Activated CD4-positive, alpha-beta T cell treated with anti-CD3 and anti-CD28 coated beads for 36 hours (primary cell): ENCODE measurements at regions of chr16 and their contacts with region 1.

Region 1: GRCh38 chr16:30698139-30698815 is 694 bp upstream of the SRCAP start:
- DNase-seq: peak; percentile 100
- ATAC-seq: peak; percentile 75
- H3K4me3 Mint-ChIP-seq: peak overlapping the region; percentile 96
- H3K27ac Mint-ChIP-seq: peak overlapping the region; percentile 99
- H3K4me1 Mint-ChIP-seq: peaks cover 33% of the 10 kb centered on the region
- H3K27me3 Mint-ChIP-seq: no peaks in the 10 kb centered on the region

Region 2: DNA sequence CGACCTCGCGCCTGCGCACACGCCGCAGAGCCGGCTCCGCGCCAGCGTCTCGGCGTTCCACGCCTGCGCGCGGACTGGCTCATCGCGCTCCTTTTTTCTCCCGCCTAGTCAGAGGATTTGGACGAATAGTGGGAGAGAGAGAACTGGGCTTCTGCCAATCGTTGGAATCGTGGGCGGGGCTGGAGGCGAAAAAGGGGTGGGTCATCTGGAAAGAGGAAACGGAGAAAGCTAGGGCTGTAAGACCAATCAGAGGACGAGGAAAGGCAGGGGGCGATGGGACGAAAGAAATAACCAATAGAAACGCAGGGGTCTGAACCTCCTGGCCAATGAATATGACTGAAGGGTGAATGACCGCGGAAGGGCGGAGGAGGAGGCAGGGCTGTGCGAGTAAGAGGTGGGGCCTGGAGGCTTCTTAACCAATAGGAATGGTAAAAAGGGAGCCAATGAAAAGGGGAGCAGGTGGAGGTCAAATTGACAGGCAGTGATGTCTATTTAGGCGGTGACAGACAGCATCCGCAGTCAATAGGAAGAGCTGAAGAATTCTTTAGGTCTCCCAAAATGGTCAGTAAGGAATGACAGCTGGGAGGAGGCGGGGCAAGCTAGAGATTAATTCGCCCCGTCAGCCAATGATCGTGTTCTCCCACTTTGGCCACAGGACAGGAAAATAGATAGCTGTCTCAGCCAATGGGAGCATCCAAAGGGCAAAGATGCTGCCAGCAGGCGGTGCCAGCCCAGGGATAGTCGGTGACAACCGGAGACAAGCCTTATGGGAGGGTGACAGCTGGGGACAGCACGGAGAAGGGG is 327.6 kb before region 1 on chr16 and contains the start of gene TBC1D10B:
- CTCF ChIA-PET with region 1: no interaction called
- POLR2A ChIA-PET with region 1: no interaction called
- intact Hi-C with region 1: loop called in 1 of 2 experiments (anchors 2 kb)
- DNase-seq: peak; percentile 99
- ATAC-seq: peak; percentile 88
- H3K4me3 Mint-ChIP-seq: peak within 1 kb of the TSS; percentile 89
- H3K27ac Mint-ChIP-seq: peak within 1 kb of the TSS; percentile 97
- H3K4me1 Mint-ChIP-seq: peaks cover 40% of the 10 kb centered on the region
- H3K27me3 Mint-ChIP-seq: no peaks in the 10 kb centered on the region
- total RNA-seq, gene TBC1D10B: 38.1 to 43.4 TPM

Region 3: DNA sequence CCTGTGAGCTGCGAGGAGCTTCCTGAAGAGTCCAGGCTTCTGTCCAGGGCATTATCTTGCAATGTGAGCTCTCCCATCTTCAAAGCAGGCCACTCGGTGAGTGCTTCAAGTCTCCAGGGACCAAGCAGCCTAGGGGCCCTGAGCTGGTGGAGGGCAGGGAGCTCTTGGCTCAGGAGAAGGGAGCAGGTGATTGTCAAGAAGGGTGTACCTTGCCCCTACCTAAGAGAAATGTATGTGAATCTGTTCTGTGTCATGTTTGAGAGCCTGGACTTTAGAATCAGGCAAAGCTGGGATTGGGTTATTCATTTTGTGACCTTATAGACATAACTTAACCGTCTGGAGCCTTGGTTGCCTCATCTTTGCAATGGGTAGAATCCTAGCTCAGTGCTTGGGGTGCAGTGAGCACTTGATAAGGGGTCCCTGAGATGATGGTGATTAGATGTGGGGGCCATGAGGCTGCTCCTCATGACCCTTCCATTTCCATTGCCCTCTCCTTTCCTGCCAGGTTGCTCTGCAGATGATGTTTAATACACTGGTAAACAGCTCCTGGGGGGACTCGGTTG is 187.8 kb before region 1 on chr16:
- CTCF ChIA-PET with region 1: no interaction called
- POLR2A ChIA-PET with region 1: no interaction called
- intact Hi-C with region 1: no loop called
- DNase-seq: no peak
- ATAC-seq: no peak
- H3K4me3 Mint-ChIP-seq: no peak overlapping the region
- H3K27ac Mint-ChIP-seq: no peak overlapping the region
- H3K4me1 Mint-ChIP-seq: no peaks in the 10 kb centered on the region
- H3K27me3 Mint-ChIP-seq: no peaks in the 10 kb centered on the region

Region 4: GRCh38 chr16:30526823-30527635 is 171.2 kb before region 1 on chr16:
- CTCF ChIA-PET with region 1: no interaction called
- POLR2A ChIA-PET with region 1: no interaction called
- intact Hi-C with region 1: loop called in 1 of 2 experiments (anchors 1 kb)
- DNase-seq: peak; percentile 98
- ATAC-seq: peak; percentile 93
- H3K4me3 Mint-ChIP-seq: peak overlapping the region; percentile 55
- H3K27ac Mint-ChIP-seq: peak overlapping the region; percentile 62
- H3K4me1 Mint-ChIP-seq: peaks cover 37% of the 10 kb centered on the region
- H3K27me3 Mint-ChIP-seq: no peaks in the 10 kb centered on the region

Region 5: GRCh38 chr16:30541502-30542329 is 156.6 kb before region 1 on chr16:
- CTCF ChIA-PET with region 1: no interaction called
- POLR2A ChIA-PET with region 1: no interaction called
- intact Hi-C with region 1: no loop called
- DNase-seq: no peak
- ATAC-seq: no peak
- H3K4me3 Mint-ChIP-seq: no peak overlapping the region
- H3K27ac Mint-ChIP-seq: no peak overlapping the region
- H3K4me1 Mint-ChIP-seq: peaks cover 11% of the 10 kb centered on the region
- H3K27me3 Mint-ChIP-seq: no peaks in the 10 kb centered on the region

Region 6: DNA sequence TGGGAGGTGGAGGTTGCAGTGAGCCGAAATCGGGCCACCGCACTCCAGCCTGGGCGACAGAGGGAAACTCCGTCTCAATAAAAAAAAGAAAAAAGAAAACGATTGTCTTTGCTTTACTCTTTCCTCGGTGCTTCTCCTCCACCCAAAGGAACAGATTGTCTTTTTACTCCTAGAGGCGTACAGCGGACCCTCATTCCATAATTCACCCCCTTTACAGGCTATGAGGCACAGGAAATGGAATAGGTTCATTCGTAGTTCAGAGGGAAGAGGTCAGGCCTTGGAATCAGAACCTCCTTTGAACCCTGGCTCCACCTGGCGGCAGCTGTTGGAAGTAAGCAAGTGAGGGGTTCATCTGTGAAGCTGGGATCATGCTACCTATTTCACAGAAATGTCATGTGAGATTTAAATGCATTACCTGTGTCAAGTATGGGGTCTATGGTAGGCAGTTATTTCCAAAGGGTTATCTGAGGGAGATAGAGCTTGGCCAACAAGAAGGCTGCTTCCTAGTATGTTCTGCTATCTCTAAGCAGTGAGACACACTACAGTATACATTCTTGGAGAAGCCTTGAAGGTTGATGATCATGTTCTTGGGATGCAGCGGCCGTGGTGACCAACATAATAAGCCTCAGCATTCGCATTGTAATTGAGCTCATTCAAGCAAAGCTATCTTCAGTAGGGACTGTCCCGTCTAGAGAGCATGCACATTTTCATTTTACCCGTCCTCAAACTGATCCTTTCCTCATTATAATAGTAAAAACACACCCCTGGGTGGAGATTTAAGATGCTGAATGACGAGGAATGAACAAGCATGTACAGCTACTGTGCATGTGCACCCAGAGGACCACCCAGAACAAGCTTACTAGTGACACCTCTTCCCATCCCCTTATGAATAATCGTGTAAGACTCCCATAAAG is 69.4 kb before region 1 on chr16:
- CTCF ChIA-PET with region 1: interaction called, 8 read pairs
- POLR2A ChIA-PET with region 1: interaction called, 5 read pairs
- intact Hi-C with region 1: loop called in 1 of 2 experiments (anchors 1 kb)
- DNase-seq: peak; percentile 95
- ATAC-seq: peak; percentile 93
- H3K4me3 Mint-ChIP-seq: peak overlapping the region; percentile 58
- H3K27ac Mint-ChIP-seq: peak overlapping the region; percentile 82
- H3K4me1 Mint-ChIP-seq: peaks cover 14% of the 10 kb centered on the region
- H3K27me3 Mint-ChIP-seq: no peaks in the 10 kb centered on the region

Region 7: GRCh38 chr16:30813821-30814189 is 115.5 kb after region 1 on chr16:
- CTCF ChIA-PET with region 1: interaction called, 5 read pairs
- POLR2A ChIA-PET with region 1: no interaction called
- intact Hi-C with region 1: loop called in 1 of 2 experiments (anchors 1 kb)
- DNase-seq: no peak
- ATAC-seq: peak; percentile 4
- H3K4me3 Mint-ChIP-seq: peak overlapping the region; percentile 87
- H3K27ac Mint-ChIP-seq: peak overlapping the region; percentile 81
- H3K4me1 Mint-ChIP-seq: peaks cover 12% of the 10 kb centered on the region
- H3K27me3 Mint-ChIP-seq: no peaks in the 10 kb centered on the region

Region 8: GRCh38 chr16:31073968-31074813 is 375.9 kb after region 1 on chr16 and contains the starts of genes ZNF646 and ZNF668:
- CTCF ChIA-PET with region 1: interaction called, 5 read pairs
- POLR2A ChIA-PET with region 1: no interaction called
- intact Hi-C with region 1: loop called in 1 of 2 experiments (anchors 1 kb)
- DNase-seq: peak; percentile 99
- ATAC-seq: peak; percentile 83
- H3K4me3 Mint-ChIP-seq: peak within 1 kb of the TSS; percentile 97
- H3K27ac Mint-ChIP-seq: peak within 1 kb of the TSS; percentile 98
- H3K4me1 Mint-ChIP-seq: peaks cover 30% of the 10 kb centered on the region
- H3K27me3 Mint-ChIP-seq: no peaks in the 10 kb centered on the region
- total RNA-seq, gene ZNF646: 21.3 to 25.8 TPM
- total RNA-seq, gene ZNF668: 9.2 to 9.9 TPM